GM18951 (cell line): ENCODE measurements at regions of chr2 and their contacts with region 1.

Region 1: GRCh38 chr2:189115126-189115525 is 64.4 kb downstream of the COL5A2 start:
- POLR2A ChIP-seq: no peak

Region 2: GRCh38 chr2:188369365-188369764 is 745.8 kb before region 1 on chr2:
- in situ Hi-C with region 1: no loop called
- POLR2A ChIP-seq: no peak

Region 3: GRCh38 chr2:188598551-188598950 is 516.6 kb before region 1 on chr2:
- in situ Hi-C with region 1: no loop called
- POLR2A ChIP-seq: no peak

Region 4: GRCh38 chr2:189412330-189412953 is 297.3 kb after region 1 on chr2:
- in situ Hi-C with region 1: loop called (anchors 25 kb)
- POLR2A ChIP-seq: no peak